ENCODE measurements at regions of chr19 and their contacts with region 1.

Region 1: GRCh38 chr19:56170261-56170660 is 5.5 kb upstream of the GALP start:
- DNase-seq: peak in 3 of 4 donors; percentile 13 to 82 (median 82)
- ATAC-seq: peak; percentile 89
- H3K4me3 ChIP-seq: no peak overlapping the region
- H3K27ac ChIP-seq: no peak overlapping the region
- H3K4me1 ChIP-seq: peaks cover 0 to 6% of the 10 kb centered on the region in 2 donors
- H3K27me3 ChIP-seq: peaks cover 0 to 16% of the 10 kb centered on the region in 2 donors
- CTCF ChIP-seq: no peak

Region 2: GRCh38 chr19:56066152-56067023 is 103.9 kb before region 1 on chr19:
- intact Hi-C with region 1: no loop called
- DNase-seq: peak; percentile 34 to 91 (median 66)
- ATAC-seq: peak; percentile 96
- H3K4me3 ChIP-seq: no peak overlapping the region
- H3K27ac ChIP-seq: no peak overlapping the region
- H3K4me1 ChIP-seq: peaks cover 4 to 8% of the 10 kb centered on the region in 2 donors
- H3K27me3 ChIP-seq: peaks cover 0 to 40% of the 10 kb centered on the region in 2 donors
- CTCF ChIP-seq: peak; percentile 90 to 93

Region 3: GRCh38 chr19:56076498-56076897 is 93.8 kb before region 1 on chr19:
- intact Hi-C with region 1: loop called in 1 of 2 experiments (anchors 5 kb)
- DNase-seq: peak in 2 of 4 donors; percentile 45 to 65
- ATAC-seq: peak; percentile 78
- H3K4me3 ChIP-seq: no peak overlapping the region
- H3K27ac ChIP-seq: no peak overlapping the region
- H3K4me1 ChIP-seq: peaks cover 6 to 10% of the 10 kb centered on the region in 2 donors
- H3K27me3 ChIP-seq: peaks cover 0 to 4% of the 10 kb centered on the region in 2 donors
- CTCF ChIP-seq: peak; percentile 83 to 84

Region 4: DNA sequence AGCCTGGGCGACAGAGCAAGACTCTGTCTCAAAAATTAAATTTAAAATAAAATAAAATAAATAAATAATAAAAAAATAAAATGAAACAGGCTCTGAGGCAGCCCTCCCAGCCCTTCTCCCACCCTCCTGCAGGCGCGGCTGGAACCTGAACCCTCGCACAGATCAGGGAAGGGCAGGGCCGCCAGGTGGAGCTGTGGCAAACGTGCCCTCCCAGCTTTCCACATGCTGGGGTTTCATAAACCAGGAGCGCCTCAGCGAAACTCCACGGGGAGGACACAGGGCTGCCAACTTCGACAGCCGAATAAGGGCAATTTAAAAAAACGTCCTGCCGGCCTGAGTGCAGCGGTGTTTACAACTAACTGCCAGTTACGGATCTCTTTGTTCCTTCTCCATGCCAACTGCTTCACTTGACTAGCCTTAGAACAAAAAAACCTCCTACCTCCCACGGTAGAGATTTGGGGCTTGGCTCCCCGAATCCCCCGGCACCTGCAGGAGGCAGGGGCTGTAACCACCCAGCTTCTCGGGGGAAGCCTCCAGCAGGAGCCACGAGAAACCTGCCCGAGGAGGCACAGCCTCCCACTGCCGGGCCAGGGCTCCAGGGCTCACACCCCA is 65.1 kb before region 1 on chr19:
- intact Hi-C with region 1: loop called in 1 of 2 experiments (anchors 10 kb)
- DNase-seq: peak in 3 of 4 donors; percentile 82 to 93 (median 84)
- ATAC-seq: peak; percentile 93
- H3K4me3 ChIP-seq: no peak overlapping the region
- H3K27ac ChIP-seq: peak overlapping the region; percentile 39 to 56
- H3K4me1 ChIP-seq: peaks cover 26 to 57% of the 10 kb centered on the region in 2 donors
- H3K27me3 ChIP-seq: no peaks in the 10 kb centered on the region
- CTCF ChIP-seq: peak; percentile 51 to 75